B cell (primary cell): ENCODE measurements at regions of chr11 and their contacts with region 1.

Region 1: DNA sequence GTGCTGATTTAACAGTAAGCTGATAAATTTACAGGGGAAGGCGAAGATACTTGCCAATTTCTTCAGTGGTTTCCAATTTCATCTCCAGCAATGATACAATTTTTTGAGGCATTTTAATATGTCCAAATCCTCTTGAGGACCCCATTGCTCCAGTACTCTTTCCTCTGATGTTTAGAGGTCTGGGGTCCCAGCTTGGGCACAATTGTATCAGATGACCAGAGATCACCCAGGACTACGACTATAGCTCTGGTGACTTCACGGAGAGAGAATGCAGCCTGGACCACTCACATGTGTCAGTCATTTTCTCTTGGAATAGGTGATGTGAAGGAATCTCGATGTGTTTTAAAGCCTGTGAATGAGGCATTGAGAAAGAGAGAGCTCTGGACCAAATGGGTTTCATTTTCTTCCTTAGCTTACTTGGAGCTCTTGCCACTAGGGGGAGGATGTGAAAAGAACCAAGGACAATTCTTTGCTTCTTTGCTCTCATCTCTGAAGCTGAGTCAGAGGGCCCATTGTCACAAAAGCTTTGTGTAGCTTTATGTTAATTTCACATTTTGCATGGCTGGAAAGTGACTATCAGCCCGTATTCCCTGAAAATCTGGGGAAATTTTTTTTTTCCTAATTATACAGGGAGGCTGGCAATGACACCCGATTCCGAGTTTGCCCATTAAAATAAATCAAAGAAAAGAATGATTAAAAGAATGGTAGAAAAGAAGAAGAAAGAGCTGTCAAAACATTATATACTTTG is 6.7 kb upstream of the CCDC90B start:
- DNase-seq: peak; percentile 63
- ATAC-seq: peak; percentile 77
- H3K4me3 ChIP-seq: peak overlapping the region in 1 of 5 experiments; percentile 21
- H3K4me3 Mint-ChIP-seq: peak overlapping the region; percentile 71
- H3K27ac ChIP-seq: no peak overlapping the region
- H3K27ac Mint-ChIP-seq: peak overlapping the region; percentile 56
- H3K4me1 ChIP-seq: peaks cover 9 to 12% of the 10 kb centered on the region in 2 donors
- H3K4me1 Mint-ChIP-seq: peaks cover 20% of the 10 kb centered on the region
- H3K27me3 ChIP-seq: peaks cover 0 to 2% (median 0%) of the 10 kb centered on the region in 4 experiments
- H3K27me3 Mint-ChIP-seq: no peaks in the 10 kb centered on the region
- CTCF ChIP-seq: peak; percentile 79

Region 2: DNA sequence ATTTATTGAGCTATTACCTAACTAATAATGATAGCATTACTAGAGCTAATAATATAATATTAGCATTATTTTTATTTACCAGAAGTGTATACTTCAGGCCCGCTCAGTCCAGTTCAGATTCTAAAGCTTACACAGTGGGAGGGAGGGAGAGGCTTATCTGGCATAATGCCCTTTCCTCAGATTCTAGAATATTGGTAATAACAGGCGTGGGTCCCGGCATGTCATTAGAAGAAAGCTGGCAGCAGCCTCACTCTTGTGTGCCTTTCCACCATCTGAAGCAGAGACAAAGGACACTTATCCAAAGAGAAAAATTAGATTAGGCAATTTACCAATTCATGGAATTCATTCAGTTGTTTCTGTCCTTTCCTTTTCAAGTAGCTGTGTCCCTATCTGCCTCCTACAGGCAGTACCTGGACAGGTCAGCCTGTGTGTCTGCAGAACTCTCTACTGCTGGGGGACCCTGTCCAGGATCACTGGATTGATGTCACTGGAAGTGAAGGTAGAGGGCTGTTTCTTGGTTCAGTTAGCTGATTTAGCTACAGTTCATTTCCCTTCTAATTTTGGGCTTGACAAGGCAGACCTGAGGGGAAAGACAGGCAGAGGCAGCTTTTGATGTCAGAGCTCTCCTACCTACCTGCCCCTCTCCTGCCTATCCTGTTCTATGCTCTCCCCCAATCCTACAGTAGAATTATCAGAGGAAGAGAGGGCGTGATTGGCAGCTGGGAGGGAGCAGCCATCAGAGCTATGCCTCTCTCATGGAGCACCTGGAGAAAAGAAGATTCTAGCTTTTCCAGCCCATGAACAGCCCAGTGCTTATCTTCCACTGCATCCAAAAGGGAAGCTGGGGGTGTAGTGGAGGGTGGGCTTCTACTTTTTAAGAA is 13.6 kb after region 1 on chr11:
- CTCF ChIA-PET with region 1: interaction called, 11 read pairs
- POLR2A ChIA-PET with region 1: no interaction called
- intact Hi-C with region 1: no loop called
- DNase-seq: no peak
- ATAC-seq: no peak
- H3K4me3 ChIP-seq: no peak overlapping the region
- H3K4me3 Mint-ChIP-seq: no peak overlapping the region
- H3K27ac ChIP-seq: no peak overlapping the region
- H3K27ac Mint-ChIP-seq: no peak overlapping the region
- H3K4me1 ChIP-seq: no peaks in the 10 kb centered on the region
- H3K4me1 Mint-ChIP-seq: no peaks in the 10 kb centered on the region
- H3K27me3 ChIP-seq: no peaks in the 10 kb centered on the region
- H3K27me3 Mint-ChIP-seq: peaks cover 11% of the 10 kb centered on the region
- CTCF ChIP-seq: no peak

Region 3: GRCh38 chr11:83480251-83480650 is 187.4 kb after region 1 on chr11:
- CTCF ChIA-PET with region 1: no interaction called
- POLR2A ChIA-PET with region 1: no interaction called
- intact Hi-C with region 1: no loop called
- DNase-seq: no peak
- ATAC-seq: no peak
- H3K4me3 ChIP-seq: no peak overlapping the region
- H3K4me3 Mint-ChIP-seq: no peak overlapping the region
- H3K27ac ChIP-seq: no peak overlapping the region
- H3K27ac Mint-ChIP-seq: no peak overlapping the region
- H3K4me1 ChIP-seq: no peaks in the 10 kb centered on the region
- H3K4me1 Mint-ChIP-seq: no peaks in the 10 kb centered on the region
- H3K27me3 ChIP-seq: peaks cover 0 to 5% (median 1%) of the 10 kb centered on the region in 4 experiments
- H3K27me3 Mint-ChIP-seq: peaks cover 17% of the 10 kb centered on the region
- CTCF ChIP-seq: no peak

Region 4: GRCh38 chr11:83724008-83724461 is 431.2 kb after region 1 on chr11:
- CTCF ChIA-PET with region 1: interaction called, 32 read pairs
- POLR2A ChIA-PET with region 1: no interaction called
- intact Hi-C with region 1: no loop called
- DNase-seq: peak; percentile 68
- ATAC-seq: peak; percentile 36
- H3K4me3 ChIP-seq: peak overlapping the region in 3 of 5 experiments; percentile 33 to 51 (median 34)
- H3K4me3 Mint-ChIP-seq: peak overlapping the region; percentile 80
- H3K27ac ChIP-seq: no peak overlapping the region
- H3K27ac Mint-ChIP-seq: peak overlapping the region; percentile 51
- H3K4me1 ChIP-seq: peaks cover 20 to 22% of the 10 kb centered on the region in 2 donors
- H3K4me1 Mint-ChIP-seq: peaks cover 25% of the 10 kb centered on the region
- H3K27me3 ChIP-seq: peaks cover 0 to 8% (median 3%) of the 10 kb centered on the region in 4 experiments
- H3K27me3 Mint-ChIP-seq: peaks cover 22% of the 10 kb centered on the region
- CTCF ChIP-seq: peak; percentile 42

Region 5: DNA sequence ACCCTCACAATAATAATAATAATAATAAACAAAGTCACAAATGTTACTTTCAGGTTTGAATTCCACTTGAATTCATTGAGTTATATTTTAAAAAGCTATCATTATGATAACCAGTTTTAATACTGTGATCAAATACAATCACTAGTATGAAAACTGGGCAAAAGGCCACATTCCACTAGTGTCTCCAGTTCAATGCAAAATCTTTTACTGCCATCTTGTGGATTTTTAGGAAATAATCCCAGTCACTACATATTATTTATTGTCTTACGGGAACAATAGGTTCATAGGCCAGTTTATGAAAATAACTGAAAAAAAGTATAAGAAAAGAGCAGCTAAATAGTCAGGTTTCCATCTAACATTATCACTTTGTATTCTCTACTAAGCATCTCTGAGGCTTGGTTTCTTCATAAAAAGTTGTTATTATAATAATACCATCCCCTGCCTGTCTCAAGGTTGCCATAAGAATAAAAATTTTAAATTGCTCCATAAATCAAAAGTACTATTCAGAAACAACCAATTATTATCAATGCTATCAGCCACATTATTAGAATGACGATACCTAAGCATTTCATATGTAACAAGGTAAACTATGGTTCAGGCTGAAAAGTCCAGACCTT is 527.2 kb after region 1 on chr11:
- CTCF ChIA-PET with region 1: interaction called, 26 read pairs
- POLR2A ChIA-PET with region 1: no interaction called
- intact Hi-C with region 1: loop called (anchors 1 kb)
- DNase-seq: peak; percentile 36
- ATAC-seq: no peak
- H3K4me3 ChIP-seq: no peak overlapping the region
- H3K4me3 Mint-ChIP-seq: no peak overlapping the region
- H3K27ac ChIP-seq: no peak overlapping the region
- H3K27ac Mint-ChIP-seq: no peak overlapping the region
- H3K4me1 ChIP-seq: no peaks in the 10 kb centered on the region
- H3K4me1 Mint-ChIP-seq: no peaks in the 10 kb centered on the region
- H3K27me3 ChIP-seq: no peaks in the 10 kb centered on the region
- H3K27me3 Mint-ChIP-seq: peaks cover 6% of the 10 kb centered on the region
- CTCF ChIP-seq: peak; percentile 67